CD4-positive, alpha-beta T cell (primary cell): ENCODE measurements at regions of chr6 and their contacts with region 1.

Region 1: DNA sequence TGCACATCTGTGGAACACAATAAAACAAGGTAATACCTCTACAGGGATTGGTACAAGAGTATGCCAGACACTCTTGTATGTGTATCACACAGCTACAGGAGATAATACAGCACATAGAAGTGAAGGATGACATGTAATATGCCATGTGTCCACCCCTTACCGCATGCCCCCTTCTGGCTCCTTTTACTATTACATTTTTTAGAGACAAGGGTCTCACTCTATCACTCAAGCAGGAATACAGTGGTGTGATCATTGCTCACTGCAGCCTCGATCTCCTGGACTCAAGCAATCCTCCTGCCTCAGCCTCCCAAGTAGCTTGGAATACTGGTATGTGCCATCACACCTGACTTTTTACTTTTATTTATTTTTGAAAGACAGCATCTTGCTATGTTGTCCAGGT is 4.2 kb upstream of the NCR3 start:
- DNase-seq: peak in 9 of 14 experiments; percentile 26 to 85 (median 45)
- ATAC-seq: peak; percentile 89
- H3K4me3 ChIP-seq: no peak overlapping the region
- H3K4me3 Mint-ChIP-seq: peak overlapping the region; percentile 7
- H3K27ac ChIP-seq: no peak overlapping the region
- H3K27ac Mint-ChIP-seq: peak overlapping the region; percentile 70
- H3K4me1 ChIP-seq: peaks cover 60% of the 10 kb centered on the region
- H3K4me1 Mint-ChIP-seq: peaks cover 40% of the 10 kb centered on the region
- H3K27me3 ChIP-seq: no peaks in the 10 kb centered on the region
- H3K27me3 Mint-ChIP-seq: no peaks in the 10 kb centered on the region
- CTCF ChIP-seq: peak; percentile 76

Region 2: DNA sequence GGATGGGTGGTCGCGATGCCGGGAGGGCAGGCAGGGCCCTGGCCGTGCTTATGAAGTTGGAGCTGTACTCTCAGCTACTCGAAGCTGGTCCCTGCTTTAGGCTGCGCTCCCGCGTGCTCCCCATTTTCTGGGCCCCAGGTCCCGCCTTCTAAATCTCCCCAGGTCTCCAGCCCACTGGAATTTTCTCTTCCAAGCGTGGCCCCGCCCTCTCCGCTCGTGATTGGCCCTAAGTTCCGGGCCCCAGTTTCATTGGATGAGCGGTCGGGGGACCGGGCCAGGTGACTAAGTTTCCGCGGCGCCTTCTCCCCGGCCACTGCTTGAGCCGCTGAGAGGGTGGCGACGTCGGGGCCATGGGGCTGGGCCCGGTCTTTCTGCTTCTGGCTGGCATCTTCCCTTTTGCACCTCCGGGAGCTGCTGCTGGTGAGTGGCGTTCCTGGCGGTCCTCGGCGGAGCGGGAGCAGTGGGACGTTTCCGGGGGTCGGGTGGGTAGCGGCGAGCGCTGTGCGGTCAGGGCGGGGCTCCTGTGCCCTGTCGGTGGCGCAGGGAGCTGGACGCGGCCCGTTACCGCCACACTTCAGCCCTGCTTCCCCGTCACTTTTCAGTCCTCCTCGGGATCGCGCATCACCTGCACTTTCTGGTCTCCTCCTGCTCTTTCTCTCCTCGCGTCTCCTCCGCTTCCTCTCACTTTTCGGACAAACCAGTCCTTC is 193.6 kb before region 1 on chr6 and contains the start of gene MICA:
- CTCF ChIA-PET with region 1: no interaction called
- POLR2A ChIA-PET with region 1: no interaction called
- intact Hi-C with region 1: loop called (anchors 5 kb)
- DNase-seq: peak; percentile 25 to 82 (median 54)
- ATAC-seq: peak; percentile 38
- H3K4me3 ChIP-seq: peak within 1 kb of the TSS; percentile 76
- H3K4me3 Mint-ChIP-seq: peak within 1 kb of the TSS; percentile 92
- H3K27ac ChIP-seq: peak within 1 kb of the TSS; percentile 33 to 50
- H3K27ac Mint-ChIP-seq: peak within 1 kb of the TSS; percentile 81
- H3K4me1 ChIP-seq: peaks cover 51% of the 10 kb centered on the region
- H3K4me1 Mint-ChIP-seq: peaks cover 75% of the 10 kb centered on the region
- H3K27me3 ChIP-seq: no peaks in the 10 kb centered on the region
- H3K27me3 Mint-ChIP-seq: no peaks in the 10 kb centered on the region
- CTCF ChIP-seq: no peak
- total RNA-seq, gene MICA: 10.6 to 14.0 TPM

Region 3: DNA sequence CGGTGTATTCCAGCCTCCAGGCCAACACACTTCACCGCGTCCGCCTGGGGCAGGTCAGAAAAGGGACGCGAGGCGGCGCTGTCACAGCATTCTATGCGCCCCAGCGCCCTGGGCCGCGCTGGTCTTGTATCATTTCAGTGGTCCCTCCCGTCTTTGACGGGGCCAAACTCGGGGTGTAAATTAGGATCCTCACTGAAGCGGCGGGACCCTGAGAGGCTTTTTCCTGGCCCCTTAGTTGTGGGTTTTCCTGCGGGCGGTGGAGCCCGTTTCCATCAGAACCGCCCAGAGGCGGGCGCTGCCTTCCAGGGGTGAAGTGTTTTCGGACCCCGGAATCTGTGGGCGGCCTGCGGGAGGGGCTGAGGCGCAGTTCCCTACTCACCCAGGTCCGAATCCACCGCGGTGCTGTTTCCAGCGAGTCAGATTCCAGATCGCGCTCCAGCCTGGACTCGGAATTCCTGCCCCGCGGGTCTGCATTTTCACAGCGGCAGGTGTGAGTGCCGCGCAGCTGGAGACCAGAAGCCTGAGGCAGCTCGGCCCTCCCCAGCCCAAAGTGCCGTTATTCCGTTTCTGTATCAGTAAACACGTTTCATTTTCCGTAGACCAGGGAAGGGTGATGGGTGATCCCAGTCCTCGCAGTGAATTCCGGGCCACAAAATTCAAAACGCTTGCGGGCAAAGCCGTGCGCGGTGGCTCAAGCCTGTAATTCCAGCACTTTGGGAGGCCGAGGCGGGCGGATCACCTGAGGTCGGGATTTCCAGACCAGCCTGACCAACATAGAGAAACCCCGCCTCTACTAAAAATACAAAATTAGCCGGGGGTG is 102.9 kb before region 1 on chr6:
- CTCF ChIA-PET with region 1: interaction called, 22 read pairs
- POLR2A ChIA-PET with region 1: interaction called, 7 read pairs
- intact Hi-C with region 1: loop called (anchors 1 kb)
- DNase-seq: peak; percentile 51 to 91 (median 74)
- ATAC-seq: peak; percentile 39
- H3K4me3 ChIP-seq: peak overlapping the region; percentile 88
- H3K4me3 Mint-ChIP-seq: peak overlapping the region; percentile 58
- H3K27ac ChIP-seq: peak overlapping the region; percentile 65 to 68
- H3K27ac Mint-ChIP-seq: peak overlapping the region; percentile 83
- H3K4me1 ChIP-seq: peaks cover 69% of the 10 kb centered on the region
- H3K4me1 Mint-ChIP-seq: peaks cover 57% of the 10 kb centered on the region
- H3K27me3 ChIP-seq: no peaks in the 10 kb centered on the region
- H3K27me3 Mint-ChIP-seq: no peaks in the 10 kb centered on the region
- CTCF ChIP-seq: peak; percentile 80

Region 4: DNA sequence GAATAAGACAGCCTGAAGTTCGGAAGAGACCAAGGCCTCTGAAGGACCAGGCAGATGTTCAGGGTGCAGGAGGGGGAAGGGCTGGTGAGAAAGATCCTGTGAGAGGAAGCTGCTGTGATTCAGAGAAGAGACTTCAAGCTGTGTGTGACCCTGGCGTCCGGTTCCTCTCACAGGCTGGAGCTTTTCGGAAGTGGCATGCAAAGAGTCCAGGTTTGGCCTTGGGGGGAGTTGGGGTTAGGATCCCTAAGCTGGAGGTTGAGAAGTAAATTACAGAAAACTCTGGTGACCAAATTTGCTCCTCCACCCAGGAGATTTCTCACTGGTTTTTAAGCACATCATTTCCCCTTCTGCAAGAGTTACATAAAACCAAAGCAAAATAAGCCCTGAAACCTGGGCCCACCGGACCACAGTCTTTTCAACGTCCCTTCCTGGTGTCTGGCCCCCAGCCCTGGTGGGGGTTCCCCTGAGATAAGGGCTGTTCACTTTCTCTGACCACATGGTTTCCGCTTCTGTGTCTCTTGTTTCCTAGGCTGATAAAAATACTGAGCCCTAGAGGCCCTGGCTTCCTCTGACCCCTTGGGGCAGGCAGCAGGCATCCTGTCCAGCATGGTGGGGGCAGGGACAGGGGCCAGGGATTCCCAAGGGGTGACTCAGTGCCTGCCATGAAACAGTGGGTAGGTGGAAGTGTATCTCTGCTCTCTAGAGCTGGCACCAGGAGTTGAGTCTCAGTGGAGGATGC is 36.9 kb before region 1 on chr6:
- CTCF ChIA-PET with region 1: interaction called, 284 read pairs
- POLR2A ChIA-PET with region 1: interaction called, 1,160 read pairs
- intact Hi-C with region 1: no loop called
- DNase-seq: peak in 7 of 14 experiments; percentile 29 to 81 (median 65)
- ATAC-seq: peak; percentile 58
- H3K4me3 ChIP-seq: peak overlapping the region; percentile 44
- H3K4me3 Mint-ChIP-seq: peak overlapping the region; percentile 82
- H3K27ac ChIP-seq: peak overlapping the region; percentile 63 to 74
- H3K27ac Mint-ChIP-seq: peak overlapping the region; percentile 90
- H3K4me1 ChIP-seq: peaks cover 72% of the 10 kb centered on the region
- H3K4me1 Mint-ChIP-seq: peaks cover 62% of the 10 kb centered on the region
- H3K27me3 ChIP-seq: no peaks in the 10 kb centered on the region
- H3K27me3 Mint-ChIP-seq: no peaks in the 10 kb centered on the region
- CTCF ChIP-seq: no peak

Region 5: DNA sequence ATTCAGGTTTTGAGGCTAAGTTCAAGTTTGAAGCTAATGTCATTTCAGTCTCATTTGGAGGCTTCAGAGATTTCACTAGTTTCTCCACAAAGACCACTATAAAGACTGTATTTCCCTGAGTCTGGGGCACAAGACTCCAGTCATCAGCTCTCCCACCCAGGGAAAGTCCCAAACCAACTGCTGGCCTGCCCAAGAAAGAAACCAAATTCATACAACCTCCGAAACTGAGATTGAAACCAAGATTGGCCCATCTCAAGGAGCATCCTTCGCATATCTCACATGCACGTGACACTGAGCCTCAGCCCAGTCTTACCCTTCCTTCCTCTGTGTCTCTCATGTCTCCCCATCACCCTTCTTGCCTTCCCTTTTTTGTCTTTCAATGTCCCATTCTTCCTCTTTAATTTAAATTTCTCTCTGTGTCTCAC is 28.5 kb before region 1 on chr6:
- CTCF ChIA-PET with region 1: interaction called, 353 read pairs
- POLR2A ChIA-PET with region 1: interaction called, 1,160 read pairs
- intact Hi-C with region 1: no loop called
- DNase-seq: peak in 9 of 14 experiments; percentile 31 to 95 (median 61)
- ATAC-seq: peak; percentile 60
- H3K4me3 ChIP-seq: no peak overlapping the region
- H3K4me3 Mint-ChIP-seq: peak overlapping the region; percentile 65
- H3K27ac ChIP-seq: peak overlapping the region; percentile 78 to 88
- H3K27ac Mint-ChIP-seq: peak overlapping the region; percentile 95
- H3K4me1 ChIP-seq: peaks cover 83% of the 10 kb centered on the region
- H3K4me1 Mint-ChIP-seq: peaks cover 81% of the 10 kb centered on the region
- H3K27me3 ChIP-seq: no peaks in the 10 kb centered on the region
- H3K27me3 Mint-ChIP-seq: no peaks in the 10 kb centered on the region
- CTCF ChIP-seq: no peak